ENCODE measurements at regions of chr5 and their contacts with region 1.

Region 1: GRCh38 chr5:150350524-150351344 is 6.8 kb upstream of the TCOF1 start:
- DNase-seq: peak; percentile 43
- H3K4me3 ChIP-seq: no peak overlapping the region
- H3K27ac ChIP-seq: no peak overlapping the region
- H3K27me3 ChIP-seq: no peaks in the 10 kb centered on the region
- CTCF ChIP-seq: peak; percentile 68

Region 2: GRCh38 chr5:150161242-150162141 is 189.2 kb before region 1 on chr5:
- CTCF ChIA-PET with region 1: interaction called, 12 read pairs
- POLR2A ChIA-PET with region 1: interaction called, 6 read pairs
- DNase-seq: no peak
- H3K4me3 ChIP-seq: no peak overlapping the region
- H3K27ac ChIP-seq: no peak overlapping the region
- H3K27me3 ChIP-seq: no peaks in the 10 kb centered on the region
- CTCF ChIP-seq: peak; percentile 99

Region 3: DNA sequence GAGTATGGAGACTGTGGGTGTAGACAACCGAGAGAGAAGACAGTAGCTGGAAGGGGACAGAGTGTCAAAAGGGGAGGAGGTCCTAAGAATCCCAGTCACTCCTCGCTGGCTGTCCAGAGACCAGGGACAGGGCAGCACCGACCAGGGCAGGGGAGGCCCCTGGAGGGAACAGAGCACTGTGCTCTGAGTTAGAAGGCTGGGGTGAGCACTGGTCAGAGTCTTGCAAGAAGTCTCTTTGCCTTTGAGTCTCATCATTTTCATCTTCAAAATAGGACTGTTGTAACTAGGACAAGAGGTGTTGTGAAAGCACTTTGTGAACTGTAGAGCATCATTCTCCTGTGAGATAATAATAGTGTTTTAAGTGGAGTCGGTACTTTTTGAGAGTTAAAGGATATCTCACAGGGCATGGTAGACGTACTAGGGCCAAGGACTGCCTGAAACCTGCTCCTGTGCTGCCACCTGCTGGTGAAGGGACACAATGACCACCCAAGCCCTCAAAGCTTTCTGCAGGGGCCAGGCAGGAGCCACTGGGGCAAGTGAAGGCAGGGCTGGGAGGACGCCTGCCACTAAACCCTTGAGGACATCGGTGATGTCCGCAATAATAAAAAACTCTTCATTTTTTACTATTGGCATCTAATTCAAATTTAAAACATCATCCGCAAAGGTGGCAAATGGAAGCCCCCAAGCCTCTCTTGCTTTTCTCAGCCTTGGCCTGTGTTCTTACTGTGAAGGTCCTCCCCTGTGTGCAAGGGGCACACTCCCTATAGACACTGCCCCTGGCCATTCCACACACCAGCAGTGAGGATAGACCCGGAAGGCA is 132.7 kb before region 1 on chr5:
- CTCF ChIA-PET with region 1: interaction called, 18 read pairs
- POLR2A ChIA-PET with region 1: no interaction called
- DNase-seq: peak; percentile 69
- H3K4me3 ChIP-seq: no peak overlapping the region
- H3K27ac ChIP-seq: no peak overlapping the region
- H3K27me3 ChIP-seq: no peaks in the 10 kb centered on the region
- CTCF ChIP-seq: peak; percentile 87

Region 4: GRCh38 chr5:150272526-150272925 is 78.2 kb before region 1 on chr5:
- CTCF ChIA-PET with region 1: interaction called, 43 read pairs
- POLR2A ChIA-PET with region 1: interaction called, 5 read pairs
- DNase-seq: no peak
- H3K4me3 ChIP-seq: no peak overlapping the region
- H3K27ac ChIP-seq: no peak overlapping the region
- H3K27me3 ChIP-seq: no peaks in the 10 kb centered on the region
- CTCF ChIP-seq: peak; percentile 69

Region 5: DNA sequence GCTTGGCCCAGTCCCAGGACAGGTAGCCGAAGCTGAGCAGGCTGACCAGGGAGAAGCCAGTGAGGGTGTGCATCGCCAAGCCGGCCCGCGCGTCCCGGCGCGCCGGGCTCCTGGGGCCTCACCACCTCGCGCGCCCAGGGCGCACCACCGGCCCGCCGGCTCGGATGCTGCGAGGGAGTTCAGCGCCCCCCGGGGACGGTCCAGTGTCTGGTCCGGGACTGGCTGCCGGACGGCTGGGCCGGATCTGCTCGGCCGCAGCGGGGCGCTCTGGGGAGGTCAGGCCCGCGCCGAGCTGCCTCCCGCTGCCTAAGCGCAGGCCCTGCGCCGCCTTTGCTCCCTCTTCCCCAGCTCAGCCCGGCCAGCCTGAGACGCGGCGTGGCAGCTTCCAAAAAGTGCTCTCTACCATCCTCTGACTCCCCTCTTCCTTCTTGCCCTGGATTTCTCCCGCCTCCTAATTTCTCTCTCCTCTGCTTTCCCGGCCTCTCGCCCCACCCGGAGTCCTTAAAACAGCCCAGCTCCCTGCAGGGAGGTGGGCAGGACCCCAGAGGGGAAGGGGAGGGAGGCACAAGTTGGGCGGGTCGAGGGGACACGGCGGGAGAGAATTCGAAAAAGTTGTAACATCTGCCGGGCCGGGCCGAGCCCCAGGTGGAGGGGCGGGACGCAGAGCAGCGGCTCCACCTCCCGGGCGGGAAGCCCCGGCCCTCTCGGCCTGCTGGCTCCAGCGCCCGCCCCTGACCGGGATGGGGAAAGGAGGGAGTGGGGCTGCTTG is 48.2 kb before region 1 on chr5 and contains the start of gene ARSI:
- CTCF ChIA-PET with region 1: interaction called, 24 read pairs
- POLR2A ChIA-PET with region 1: interaction called, 3 read pairs
- DNase-seq: peak; percentile 55
- H3K4me3 ChIP-seq: peak within 1 kb of the TSS; percentile 60
- H3K27ac ChIP-seq: peak within 1 kb of the TSS; percentile 82
- H3K27me3 ChIP-seq: no peaks in the 10 kb centered on the region
- CTCF ChIP-seq: peak; percentile 21; the same call in 1 of the 2 replicates
- polyA plus RNA-seq, gene ARSI: 11.3 and 15.8 TPM in 2 replicates

Region 6: GRCh38 chr5:150339165-150339564 is 11.6 kb before region 1 on chr5:
- CTCF ChIA-PET with region 1: interaction called, 17 read pairs
- POLR2A ChIA-PET with region 1: no interaction called
- DNase-seq: no peak
- H3K4me3 ChIP-seq: no peak overlapping the region
- H3K27ac ChIP-seq: no peak overlapping the region
- H3K27me3 ChIP-seq: no peaks in the 10 kb centered on the region
- CTCF ChIP-seq: no peak

Measured in AG04450 (cell line).